ENCODE measurements at regions of chr13 and their contacts with region 1.

Region 1: DNA sequence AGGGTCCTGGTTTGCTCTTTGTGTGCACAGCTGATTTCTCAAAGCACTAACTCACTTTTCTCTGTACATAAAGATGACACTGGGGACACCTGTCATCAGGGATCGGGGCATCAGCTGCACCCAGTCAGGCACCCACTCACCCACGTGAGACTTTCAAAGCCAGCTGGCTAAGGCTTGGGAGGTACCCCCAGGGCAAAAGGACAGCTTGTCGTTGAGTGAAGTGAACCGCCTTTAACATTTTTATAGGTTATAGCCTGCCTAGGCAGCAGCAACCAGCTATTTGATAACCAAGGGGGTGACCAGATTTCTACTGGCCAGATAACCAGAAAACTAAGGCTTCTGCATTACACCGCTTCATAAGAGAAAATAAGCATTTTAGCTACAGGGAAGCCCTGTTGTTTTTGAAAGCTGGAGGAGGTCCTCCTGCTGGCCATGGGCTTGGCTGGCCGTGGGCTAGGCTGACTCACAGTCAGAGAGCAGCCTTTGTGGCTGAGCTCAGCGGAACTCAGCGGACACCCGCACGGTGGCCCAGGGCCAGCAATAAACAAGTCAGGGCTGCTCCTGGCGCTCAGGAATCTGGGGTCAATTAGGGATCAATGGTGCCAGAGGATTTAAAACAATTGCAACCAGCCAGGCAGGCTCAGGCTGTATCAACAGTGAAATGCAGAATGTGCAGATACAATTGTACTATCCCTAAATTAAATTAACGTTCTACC is 57.1 kb downstream of the ALOX5AP start:
- DNase-seq: peak; percentile 87 to 94
- H3K4me3 ChIP-seq: no peak overlapping the region
- H3K27ac ChIP-seq: peak overlapping the region; percentile 60
- H3K4me1 ChIP-seq: peaks cover 54% of the 10 kb centered on the region
- H3K27me3 ChIP-seq: no peaks in the 10 kb centered on the region
- CTCF ChIP-seq: peak; percentile 52; the same call in 1 of the 2 replicates

Region 2: DNA sequence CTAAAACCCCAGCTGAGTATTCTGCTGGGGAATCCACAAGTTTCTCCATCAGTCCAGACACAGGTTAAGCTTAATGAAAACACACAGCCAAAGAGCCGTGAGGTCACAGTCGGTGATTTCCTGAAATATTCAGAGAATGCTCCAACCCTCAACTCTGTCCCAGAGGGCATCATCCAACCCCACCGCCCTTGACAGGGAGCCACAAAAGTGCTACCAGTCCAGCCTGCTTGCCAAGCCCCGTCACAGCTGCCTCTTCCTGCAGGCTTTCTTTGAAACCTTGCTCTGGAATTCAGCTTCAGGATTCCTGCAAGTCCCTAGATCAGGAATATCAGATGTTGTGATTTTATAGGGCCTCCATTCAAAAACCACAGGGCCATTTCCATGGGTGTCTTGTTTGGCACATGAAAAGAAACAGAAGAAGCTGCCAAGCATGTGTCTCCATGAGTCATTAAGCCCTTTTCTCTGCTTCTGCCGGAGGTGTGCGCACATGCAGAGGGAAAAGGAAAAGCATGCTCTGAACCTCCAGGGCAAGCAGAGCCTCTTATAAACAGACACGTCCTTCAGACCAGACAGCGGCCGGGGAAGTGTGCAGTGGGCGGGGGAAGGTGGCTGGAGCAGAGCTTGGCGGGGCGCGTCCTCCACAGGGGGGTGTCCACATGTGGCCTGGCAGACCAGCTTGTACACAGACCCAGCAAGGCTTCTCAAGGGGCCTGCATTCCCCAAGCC is 649.8 kb before region 1 on chr13:
- CTCF ChIA-PET with region 1: no interaction called
- POLR2A ChIA-PET with region 1: no interaction called
- intact Hi-C with region 1: loop called (anchors 1 kb)
- DNase-seq: peak; percentile 87 to 96
- H3K4me3 ChIP-seq: no peak overlapping the region; the same call in 1 of the 2 replicates
- H3K27ac ChIP-seq: peak overlapping the region; percentile 83
- H3K4me1 ChIP-seq: peaks cover 34% of the 10 kb centered on the region
- H3K27me3 ChIP-seq: no peaks in the 10 kb centered on the region
- CTCF ChIP-seq: no peak

Region 3: GRCh38 chr13:30617315-30618185 is 174.9 kb before region 1 on chr13 and contains the start of gene USPL1:
- CTCF ChIA-PET with region 1: no interaction called
- POLR2A ChIA-PET with region 1: no interaction called
- intact Hi-C with region 1: loop called (anchors 2 kb)
- DNase-seq: peak; percentile 93 to 95
- H3K4me3 ChIP-seq: peak within 1 kb of the TSS; percentile 99
- H3K27ac ChIP-seq: peak within 1 kb of the TSS; percentile 98
- H3K4me1 ChIP-seq: peaks cover 33% of the 10 kb centered on the region
- H3K27me3 ChIP-seq: no peaks in the 10 kb centered on the region
- CTCF ChIP-seq: no peak
- total RNA-seq, gene USPL1: 8.9 and 10.7 TPM in 2 replicates

Region 4: GRCh38 chr13:30679483-30680330 is 112.7 kb before region 1 on chr13:
- CTCF ChIA-PET with region 1: interaction called, 3 read pairs
- POLR2A ChIA-PET with region 1: no interaction called
- intact Hi-C with region 1: loop called (anchors 1 kb)
- DNase-seq: no peak
- H3K4me3 ChIP-seq: no peak overlapping the region
- H3K27ac ChIP-seq: no peak overlapping the region
- H3K4me1 ChIP-seq: no peaks in the 10 kb centered on the region
- H3K27me3 ChIP-seq: no peaks in the 10 kb centered on the region
- CTCF ChIP-seq: peak; percentile 65

Region 5: GRCh38 chr13:30739761-30740642 is 52.4 kb before region 1 on chr13:
- CTCF ChIA-PET with region 1: no interaction called
- POLR2A ChIA-PET with region 1: no interaction called
- intact Hi-C with region 1: loop called (anchors 1 kb)
- DNase-seq: peak; percentile 15 to 97
- H3K4me3 ChIP-seq: peak overlapping the region; percentile 31; the same call in 1 of the 2 replicates
- H3K27ac ChIP-seq: peak overlapping the region; percentile 67
- H3K4me1 ChIP-seq: peaks cover 70% of the 10 kb centered on the region
- H3K27me3 ChIP-seq: no peaks in the 10 kb centered on the region
- CTCF ChIP-seq: no peak

Region 6: GRCh38 chr13:30763786-30764413 is 28.5 kb before region 1 on chr13:
- CTCF ChIA-PET with region 1: no interaction called
- POLR2A ChIA-PET with region 1: no interaction called
- intact Hi-C with region 1: no loop called
- DNase-seq: no peak
- H3K4me3 ChIP-seq: no peak overlapping the region
- H3K27ac ChIP-seq: no peak overlapping the region
- H3K4me1 ChIP-seq: no peaks in the 10 kb centered on the region
- H3K27me3 ChIP-seq: no peaks in the 10 kb centered on the region
- CTCF ChIP-seq: no peak

Region 7: GRCh38 chr13:30865123-30866049 is 72.9 kb after region 1 on chr13:
- CTCF ChIA-PET with region 1: no interaction called
- POLR2A ChIA-PET with region 1: interaction called, 12 read pairs
- intact Hi-C with region 1: loop called (anchors 2 kb)
- DNase-seq: peak; percentile 57 to 65
- H3K4me3 ChIP-seq: no peak overlapping the region
- H3K27ac ChIP-seq: 0 out of 2 replicates have a peak overlapping the region, but pooled peaks have one; percentile 5
- H3K4me1 ChIP-seq: 0 out of 2 replicates have a peak, but pooled peaks cover 9% of the 10 kb centered on the region
- H3K27me3 ChIP-seq: no peaks in the 10 kb centered on the region
- CTCF ChIP-seq: peak; percentile 96

Measured in PC-9 (cell line).